ENCODE measurements at regions of chr7 and their contacts with region 1.

Region 1: GRCh38 chr7:123748734-123749536 is at the start of gene WASL:
- DNase-seq: peak; percentile 85
- ATAC-seq: peak; percentile 92
- H3K4me3 ChIP-seq: peak within 1 kb of the TSS; percentile 74
- H3K27ac ChIP-seq: peak within 1 kb of the TSS; percentile 90
- H3K4me1 ChIP-seq: peaks cover 2% of the 10 kb centered on the region; the same call in 1 of the 2 replicates
- H3K27me3 ChIP-seq: no peaks in the 10 kb centered on the region
- CTCF ChIP-seq: 0 out of 2 replicates have a peak, but pooled peaks have one; percentile 14
- POLR2A ChIP-seq: peak; percentile 87
- RAD21 ChIP-seq: no peak
- total RNA-seq, gene WASL: 2.3 and 5.3 TPM in 2 replicates

Region 2: DNA sequence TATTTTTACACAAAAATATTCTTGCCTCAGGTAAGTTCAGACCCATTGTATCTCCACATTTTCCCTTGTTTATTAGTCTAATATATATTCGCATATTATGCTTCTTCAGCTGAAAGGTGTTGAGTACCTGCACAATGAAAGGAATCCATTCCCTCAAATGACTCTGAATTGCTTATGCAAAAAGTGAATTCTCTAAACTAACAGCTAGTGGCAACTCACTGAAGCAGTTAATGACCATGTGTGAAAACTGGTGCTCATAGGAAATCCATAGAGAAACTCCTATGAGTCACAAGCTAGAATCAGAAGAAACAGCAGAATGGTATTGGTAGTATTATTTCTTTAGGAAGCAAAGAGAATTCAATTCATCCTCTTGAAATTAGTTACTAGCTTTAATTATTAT is 1012.8 kb before region 1 on chr7:
- CTCF ChIA-PET with region 1: no interaction called
- POLR2A ChIA-PET with region 1: no interaction called
- dilution Hi-C with region 1: no loop called
- in situ Hi-C with region 1: no loop called
- intact Hi-C with region 1: no loop called
- DNase-seq: no peak
- ATAC-seq: no peak
- H3K4me3 ChIP-seq: no peak overlapping the region
- H3K27ac ChIP-seq: no peak overlapping the region
- H3K4me1 ChIP-seq: no peaks in the 10 kb centered on the region
- H3K27me3 ChIP-seq: no peaks in the 10 kb centered on the region
- CTCF ChIP-seq: no peak
- POLR2A ChIP-seq: no peak
- RAD21 ChIP-seq: no peak

Region 3: GRCh38 chr7:123557398-123558288 is 191.3 kb before region 1 on chr7 and contains the start of gene NDUFA5:
- CTCF ChIA-PET with region 1: no interaction called
- POLR2A ChIA-PET with region 1: no interaction called
- dilution Hi-C with region 1: no loop called
- in situ Hi-C with region 1: no loop called
- intact Hi-C with region 1: loop called (anchors 5 kb)
- DNase-seq: peak; percentile 99
- ATAC-seq: peak; percentile 99
- H3K4me3 ChIP-seq: peak within 1 kb of the TSS; percentile 66
- H3K27ac ChIP-seq: peak within 1 kb of the TSS; percentile 72
- H3K4me1 ChIP-seq: no peaks in the 10 kb centered on the region
- H3K27me3 ChIP-seq: no peaks in the 10 kb centered on the region
- CTCF ChIP-seq: no peak
- POLR2A ChIP-seq: peak; percentile 64; the same call in 1 of the 2 replicates
- RAD21 ChIP-seq: no peak
- total RNA-seq, gene NDUFA5: 2.9 and 14.4 TPM in 2 replicates

Region 4: DNA sequence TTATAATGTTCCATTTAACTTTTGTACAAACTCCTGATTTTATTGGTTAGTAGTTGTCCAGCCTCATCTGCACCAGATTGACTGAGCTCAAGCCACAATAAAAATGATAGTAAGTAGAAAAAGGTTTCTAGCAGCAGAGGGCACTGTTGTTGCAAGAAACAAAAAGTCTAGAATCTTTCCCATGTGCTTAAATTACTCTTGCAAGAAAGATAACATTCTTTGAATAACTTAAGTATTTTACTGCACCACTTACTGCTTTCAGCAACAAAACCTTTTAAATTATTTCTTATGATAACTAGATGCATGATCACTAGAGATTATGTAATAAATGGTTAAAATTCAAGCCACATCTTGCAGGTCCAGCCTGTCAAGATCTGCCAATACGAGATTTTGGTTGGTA is 66.2 kb before region 1 on chr7:
- CTCF ChIA-PET with region 1: interaction called, 3 read pairs
- POLR2A ChIA-PET with region 1: no interaction called
- dilution Hi-C with region 1: no loop called
- in situ Hi-C with region 1: no loop called
- intact Hi-C with region 1: loop called (anchors 2 kb)
- DNase-seq: peak; percentile 77
- ATAC-seq: peak; percentile 74
- H3K4me3 ChIP-seq: no peak overlapping the region
- H3K27ac ChIP-seq: no peak overlapping the region
- H3K4me1 ChIP-seq: 0 out of 2 replicates have a peak, but pooled peaks cover 3% of the 10 kb centered on the region
- H3K27me3 ChIP-seq: no peaks in the 10 kb centered on the region
- CTCF ChIP-seq: peak; percentile 68
- POLR2A ChIP-seq: no peak
- RAD21 ChIP-seq: peak; percentile 68

Region 5: DNA sequence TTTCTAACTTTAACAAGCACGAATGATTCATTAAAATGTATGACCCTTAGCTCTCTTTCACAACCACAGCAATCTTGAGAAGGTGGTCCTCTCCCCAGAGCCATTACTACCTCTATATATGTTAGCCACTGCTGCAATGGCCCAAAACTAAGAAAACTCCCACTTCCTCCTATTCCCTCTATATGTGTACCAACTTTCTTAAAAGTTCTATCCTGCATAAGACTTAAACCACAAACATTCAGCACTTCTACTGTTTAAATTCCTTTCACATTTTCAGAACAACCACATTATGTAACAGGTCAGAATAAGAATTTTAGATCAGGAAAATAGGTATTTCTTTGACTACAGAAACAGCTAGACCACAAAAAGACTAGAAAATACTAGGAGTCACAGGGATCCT is 36.3 kb before region 1 on chr7:
- CTCF ChIA-PET with region 1: no interaction called
- POLR2A ChIA-PET with region 1: no interaction called
- dilution Hi-C with region 1: no loop called
- in situ Hi-C with region 1: no loop called
- intact Hi-C with region 1: loop called (anchors 1 kb)
- DNase-seq: peak; percentile 69
- ATAC-seq: peak; percentile 65
- H3K4me3 ChIP-seq: no peak overlapping the region
- H3K27ac ChIP-seq: no peak overlapping the region
- H3K4me1 ChIP-seq: peaks cover 16% of the 10 kb centered on the region
- H3K27me3 ChIP-seq: no peaks in the 10 kb centered on the region
- CTCF ChIP-seq: no peak
- POLR2A ChIP-seq: no peak
- RAD21 ChIP-seq: no peak

Region 6: GRCh38 chr7:123727071-123727837 is 21.7 kb before region 1 on chr7:
- CTCF ChIA-PET with region 1: interaction called, 4 read pairs
- POLR2A ChIA-PET with region 1: interaction called, 3 read pairs
- dilution Hi-C with region 1: no loop called
- in situ Hi-C with region 1: no loop called
- intact Hi-C with region 1: loop called (anchors 1 kb)
- DNase-seq: peak; percentile 90
- ATAC-seq: peak; percentile 78
- H3K4me3 ChIP-seq: no peak overlapping the region; the same call in 1 of the 2 replicates
- H3K27ac ChIP-seq: no peak overlapping the region
- H3K4me1 ChIP-seq: peaks cover 5% of the 10 kb centered on the region
- H3K27me3 ChIP-seq: no peaks in the 10 kb centered on the region
- CTCF ChIP-seq: no peak
- POLR2A ChIP-seq: no peak
- RAD21 ChIP-seq: no peak

Region 7: DNA sequence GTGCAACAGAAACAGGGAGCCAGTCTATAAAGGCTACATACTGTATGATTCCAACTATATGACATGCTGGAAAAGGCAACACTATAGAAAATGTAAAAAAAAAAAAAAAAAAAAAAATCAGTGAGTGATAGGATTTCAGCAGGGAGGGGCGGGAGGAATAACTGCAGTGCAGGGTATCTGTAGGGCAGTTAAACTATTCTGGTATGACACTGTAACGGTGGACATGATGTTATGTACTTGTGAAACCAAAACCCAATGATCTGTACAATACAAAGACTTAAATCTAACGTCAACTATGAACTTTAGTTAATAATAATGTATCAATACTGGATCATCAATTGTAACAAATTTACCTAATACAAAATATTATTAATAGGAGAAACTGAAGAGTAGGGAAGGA is 14.4 kb before region 1 on chr7:
- CTCF ChIA-PET with region 1: interaction called, 3 read pairs
- POLR2A ChIA-PET with region 1: interaction called, 27 read pairs
- dilution Hi-C with region 1: no loop called
- in situ Hi-C with region 1: no loop called
- intact Hi-C with region 1: no loop called
- DNase-seq: no peak
- ATAC-seq: no peak
- H3K4me3 ChIP-seq: no peak overlapping the region
- H3K27ac ChIP-seq: no peak overlapping the region
- H3K4me1 ChIP-seq: no peaks in the 10 kb centered on the region
- H3K27me3 ChIP-seq: no peaks in the 10 kb centered on the region
- CTCF ChIP-seq: no peak
- POLR2A ChIP-seq: no peak
- RAD21 ChIP-seq: no peak

Region 8: DNA sequence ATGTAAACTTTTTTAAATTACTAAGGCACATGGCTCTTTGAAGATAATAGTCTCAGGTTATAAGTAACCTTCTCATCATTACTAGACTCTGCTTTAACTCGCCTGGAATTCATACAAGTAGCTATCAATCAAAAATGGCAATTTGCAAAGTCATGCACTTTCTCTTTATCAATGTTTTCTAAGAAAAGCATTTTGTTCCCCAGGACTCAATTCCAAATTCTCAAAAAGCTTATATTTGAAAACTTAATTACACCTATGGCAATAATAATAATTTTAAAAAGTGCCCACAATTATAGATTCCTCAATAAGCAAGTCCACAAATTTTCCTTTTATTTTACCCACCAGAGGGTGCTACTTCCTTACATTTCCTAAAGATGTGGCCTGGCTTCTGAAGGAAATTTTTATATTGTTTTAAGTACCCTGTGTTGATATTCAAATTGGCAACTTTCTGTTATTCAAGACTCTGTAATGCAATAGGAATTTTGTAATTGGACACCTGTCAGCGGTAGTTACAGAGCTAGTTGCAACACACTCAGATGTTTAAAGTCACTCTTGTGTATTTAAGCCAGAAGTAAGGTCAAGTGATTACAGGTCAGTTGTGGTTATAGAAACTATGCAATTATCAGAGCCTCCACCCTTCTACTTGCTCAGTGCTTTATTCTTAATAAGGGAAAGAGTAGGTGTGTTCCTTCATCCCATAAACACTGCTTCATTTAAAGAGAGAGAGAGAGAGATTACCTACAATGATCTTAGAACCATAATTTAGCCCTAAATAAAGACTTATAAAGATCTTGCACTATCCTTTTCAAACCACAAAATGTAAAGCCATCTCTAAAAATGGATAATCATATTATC is 49.0 kb after region 1 on chr7:
- CTCF ChIA-PET with region 1: no interaction called
- POLR2A ChIA-PET with region 1: no interaction called
- dilution Hi-C with region 1: no loop called
- in situ Hi-C with region 1: no loop called
- intact Hi-C with region 1: loop called (anchors 5 kb)
- DNase-seq: peak; percentile 78
- ATAC-seq: peak; percentile 77
- H3K4me3 ChIP-seq: no peak overlapping the region
- H3K27ac ChIP-seq: no peak overlapping the region
- H3K4me1 ChIP-seq: peaks cover 2% of the 10 kb centered on the region; the same call in 1 of the 2 replicates
- H3K27me3 ChIP-seq: 0 out of 2 replicates have a peak, but pooled peaks cover under 1% of the 10 kb centered on the region
- CTCF ChIP-seq: peak; percentile 61
- POLR2A ChIP-seq: no peak
- RAD21 ChIP-seq: peak; percentile 61

Region 9: GRCh38 chr7:124364283-124364682 is 615.3 kb after region 1 on chr7:
- CTCF ChIA-PET with region 1: no interaction called
- POLR2A ChIA-PET with region 1: no interaction called
- dilution Hi-C with region 1: no loop called
- in situ Hi-C with region 1: no loop called
- intact Hi-C with region 1: no loop called
- DNase-seq: no peak
- ATAC-seq: no peak
- H3K4me3 ChIP-seq: no peak overlapping the region
- H3K27ac ChIP-seq: no peak overlapping the region
- H3K4me1 ChIP-seq: no peaks in the 10 kb centered on the region
- H3K27me3 ChIP-seq: no peaks in the 10 kb centered on the region
- CTCF ChIP-seq: no peak
- POLR2A ChIP-seq: no peak
- RAD21 ChIP-seq: no peak